ENCODE measurements at regions of chr6 and their contacts with region 1.

Region 1: GRCh38 chr6:139250296-139251044 is 41.3 kb downstream of the TXLNB start:
- DNase-seq: peak; percentile 43
- H3K4me3 Mint-ChIP-seq: peak overlapping the region; percentile 43
- H3K27ac Mint-ChIP-seq: peak overlapping the region; percentile 91
- H3K4me1 Mint-ChIP-seq: peaks cover 45% of the 10 kb centered on the region
- H3K27me3 Mint-ChIP-seq: no peaks in the 10 kb centered on the region

Region 2: GRCh38 chr6:139187489-139187888 is 63.0 kb before region 1 on chr6:
- intact Hi-C with region 1: loop called (anchors 2 kb)
- DNase-seq: no peak
- H3K4me3 Mint-ChIP-seq: no peak overlapping the region
- H3K27ac Mint-ChIP-seq: no peak overlapping the region
- H3K4me1 Mint-ChIP-seq: peaks cover 29% of the 10 kb centered on the region
- H3K27me3 Mint-ChIP-seq: no peaks in the 10 kb centered on the region

Region 3: GRCh38 chr6:139219271-139219729 is 31.2 kb before region 1 on chr6:
- intact Hi-C with region 1: loop called (anchors 2 kb)
- DNase-seq: peak; percentile 62
- H3K4me3 Mint-ChIP-seq: peak overlapping the region; percentile 38
- H3K27ac Mint-ChIP-seq: peak overlapping the region; percentile 61
- H3K4me1 Mint-ChIP-seq: peaks cover 10% of the 10 kb centered on the region
- H3K27me3 Mint-ChIP-seq: no peaks in the 10 kb centered on the region

Region 4: DNA sequence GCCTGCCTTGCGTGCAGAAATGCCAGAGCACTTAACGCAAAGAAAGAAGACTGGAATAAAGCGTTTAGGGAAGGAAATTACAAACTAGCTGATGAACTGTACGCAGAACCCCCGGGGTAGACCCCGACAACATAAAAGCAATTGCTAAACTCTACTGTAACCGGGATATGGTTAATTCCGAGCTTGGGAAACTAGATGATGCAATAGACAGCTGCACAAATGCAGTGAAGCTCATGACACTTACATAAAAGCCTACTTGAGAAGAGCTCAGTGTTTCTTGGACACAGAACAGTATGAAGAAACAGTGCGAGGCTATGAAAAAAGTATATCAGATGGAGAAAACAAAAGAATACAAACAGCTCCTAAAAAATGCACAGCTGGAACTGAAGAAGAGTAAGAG is 88.4 kb after region 1 on chr6:
- intact Hi-C with region 1: no loop called
- DNase-seq: no peak
- H3K4me3 Mint-ChIP-seq: no peak overlapping the region
- H3K27ac Mint-ChIP-seq: no peak overlapping the region
- H3K4me1 Mint-ChIP-seq: peaks cover 12% of the 10 kb centered on the region
- H3K27me3 Mint-ChIP-seq: no peaks in the 10 kb centered on the region

Measured in activated T-helper 1 cell treated with anti-CD3 and anti-CD28 coated beads, Interleukin-12 subunit alpha, Interleukin-12 subunit beta, Interleukin-2, Interleukin-4 antibody, amounts not matched to agents 30 ng/mL and 10 ng/mL and 1 ng/mL, durations not matched to agents 14 hours and 24 hours and 36 hours (primary cell).